Testis (tissue), 5 donors: ENCODE measurements at regions of chr10 and their contacts with region 1.

Region 1: GRCh38 chr10:86899670-86900276 is 57.6 kb downstream of the MMRN2 start:
- DNase-seq: peak; percentile 86
- H3K4me3 ChIP-seq: no peak overlapping the region
- H3K27ac ChIP-seq: no peak overlapping the region
- H3K4me1 ChIP-seq: peaks cover 11% of the 10 kb centered on the region
- H3K27me3 ChIP-seq: no peaks in the 10 kb centered on the region
- CTCF ChIP-seq: peak; percentile 71 to 82 (median 78)
- POLR2A ChIP-seq: no peak

Region 2: GRCh38 chr10:86693721-86694369 is 205.9 kb before region 1 on chr10:
- intact Hi-C with region 1: loop called (anchors 10 kb)
- DNase-seq: peak; percentile 83
- H3K4me3 ChIP-seq: no peak overlapping the region
- H3K27ac ChIP-seq: peak overlapping the region in 1 of 2 donors; percentile 48
- H3K4me1 ChIP-seq: peaks cover 8% of the 10 kb centered on the region
- H3K27me3 ChIP-seq: no peaks in the 10 kb centered on the region
- CTCF ChIP-seq: peak; percentile 62 to 70 (median 68)
- POLR2A ChIP-seq: no peak